ENCODE measurements at regions of chr3 and their contacts with region 1.

Region 1: DNA sequence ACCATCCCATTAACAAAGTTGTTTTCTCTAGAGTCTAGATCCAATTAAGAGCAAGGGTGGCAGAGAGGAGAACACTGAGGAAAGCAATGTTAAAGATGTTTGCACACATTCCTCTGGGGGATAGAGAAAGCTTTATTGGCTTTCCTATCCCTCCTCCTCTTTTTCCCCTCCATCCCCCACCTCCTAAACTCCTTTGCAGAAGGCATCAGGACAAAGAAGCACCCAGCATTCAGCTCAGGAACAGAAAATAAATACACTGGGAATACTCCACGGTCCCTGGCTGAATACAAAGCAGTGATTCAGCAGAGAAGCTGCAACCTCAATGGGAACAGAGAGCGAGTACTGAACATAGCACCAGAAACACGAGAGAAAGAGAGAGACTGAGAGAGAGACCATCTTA is 21.9 kb downstream of the LSAMP start:
- DNase-seq: no peak
- ATAC-seq: no peak; the same call in 2 of the 3 replicates
- H3K4me3 ChIP-seq: no peak overlapping the region
- H3K27ac ChIP-seq: no peak overlapping the region
- H3K4me1 ChIP-seq: no peaks in the 10 kb centered on the region
- H3K27me3 ChIP-seq: no peaks in the 10 kb centered on the region
- CTCF ChIP-seq: no peak
- EP300 ChIP-seq: no peak
- POLR2A ChIP-seq: no peak
- RAD21 ChIP-seq: no peak

Region 2: GRCh38 chr3:116005404-116005803 is 418.0 kb before region 1 on chr3:
- CTCF ChIA-PET with region 1: no interaction called
- POLR2A ChIA-PET with region 1: no interaction called
- RAD21 ChIA-PET with region 1: no interaction called
- SMC1A ChIA-PET with region 1: no interaction called
- in situ Hi-C with region 1: no loop called
- intact Hi-C with region 1: no loop called
- DNase-seq: no peak
- ATAC-seq: peak; percentile 38; the same call in 2 of the 3 replicates
- H3K4me3 ChIP-seq: no peak overlapping the region
- H3K27ac ChIP-seq: no peak overlapping the region
- H3K4me1 ChIP-seq: peaks cover 5% of the 10 kb centered on the region; the same call in 1 of the 2 replicates
- H3K27me3 ChIP-seq: no peaks in the 10 kb centered on the region
- CTCF ChIP-seq: no peak
- EP300 ChIP-seq: no peak
- POLR2A ChIP-seq: no peak
- RAD21 ChIP-seq: no peak

Region 3: GRCh38 chr3:116378077-116378476 is 45.3 kb before region 1 on chr3:
- CTCF ChIA-PET with region 1: no interaction called
- POLR2A ChIA-PET with region 1: no interaction called
- RAD21 ChIA-PET with region 1: no interaction called
- SMC1A ChIA-PET with region 1: no interaction called
- in situ Hi-C with region 1: no loop called
- intact Hi-C with region 1: no loop called
- DNase-seq: no peak
- ATAC-seq: no peak; the same call in 2 of the 3 replicates
- H3K4me3 ChIP-seq: no peak overlapping the region
- H3K27ac ChIP-seq: no peak overlapping the region
- H3K4me1 ChIP-seq: no peaks in the 10 kb centered on the region
- H3K27me3 ChIP-seq: no peaks in the 10 kb centered on the region
- CTCF ChIP-seq: no peak
- EP300 ChIP-seq: no peak
- POLR2A ChIP-seq: no peak
- RAD21 ChIP-seq: no peak

Region 4: GRCh38 chr3:116394365-116394764 is 29.0 kb before region 1 on chr3:
- CTCF ChIA-PET with region 1: no interaction called
- POLR2A ChIA-PET with region 1: no interaction called
- RAD21 ChIA-PET with region 1: no interaction called
- SMC1A ChIA-PET with region 1: no interaction called
- in situ Hi-C with region 1: no loop called
- intact Hi-C with region 1: no loop called
- DNase-seq: no peak
- ATAC-seq: no peak
- H3K4me3 ChIP-seq: no peak overlapping the region
- H3K27ac ChIP-seq: no peak overlapping the region
- H3K4me1 ChIP-seq: no peaks in the 10 kb centered on the region
- H3K27me3 ChIP-seq: no peaks in the 10 kb centered on the region
- CTCF ChIP-seq: no peak
- EP300 ChIP-seq: no peak
- POLR2A ChIP-seq: no peak
- RAD21 ChIP-seq: no peak

Region 5: GRCh38 chr3:116441652-116442051 is 18.3 kb after region 1 on chr3:
- CTCF ChIA-PET with region 1: interaction called, 3 read pairs
- POLR2A ChIA-PET with region 1: interaction called, 4 read pairs
- RAD21 ChIA-PET with region 1: no interaction called
- SMC1A ChIA-PET with region 1: interaction called, 10 read pairs
- in situ Hi-C with region 1: no loop called
- intact Hi-C with region 1: no loop called
- DNase-seq: no peak
- ATAC-seq: no peak
- H3K4me3 ChIP-seq: no peak overlapping the region
- H3K27ac ChIP-seq: no peak overlapping the region
- H3K4me1 ChIP-seq: no peaks in the 10 kb centered on the region
- H3K27me3 ChIP-seq: peaks cover 2 to 6% of the 10 kb centered on the region in 2 experiments; a peak in 2 of 4 replicates
- CTCF ChIP-seq: no peak
- EP300 ChIP-seq: no peak
- POLR2A ChIP-seq: no peak
- RAD21 ChIP-seq: no peak

Region 6: DNA sequence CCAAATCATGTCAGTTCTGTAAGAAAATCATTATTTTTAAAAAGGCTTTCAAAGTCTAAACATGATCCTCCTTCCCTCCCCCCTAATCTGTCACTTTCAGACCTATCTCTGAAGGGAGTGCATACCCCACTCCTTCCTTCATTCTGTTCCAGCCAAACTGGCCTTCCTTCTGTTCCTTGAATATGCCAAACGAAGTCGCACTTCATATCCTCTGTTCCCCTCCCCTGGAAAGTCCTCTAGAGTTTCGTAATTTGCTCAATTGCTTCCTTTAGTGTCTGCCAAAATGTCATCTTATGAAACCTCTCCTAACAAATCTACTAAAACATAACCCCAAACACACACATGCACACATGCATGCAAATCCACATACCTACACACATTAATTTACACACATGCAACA is 216.7 kb after region 1 on chr3:
- CTCF ChIA-PET with region 1: no interaction called
- POLR2A ChIA-PET with region 1: no interaction called
- RAD21 ChIA-PET with region 1: no interaction called
- SMC1A ChIA-PET with region 1: no interaction called
- in situ Hi-C with region 1: no loop called
- intact Hi-C with region 1: no loop called
- DNase-seq: no peak
- ATAC-seq: no peak
- H3K4me3 ChIP-seq: no peak overlapping the region
- H3K27ac ChIP-seq: no peak overlapping the region
- H3K4me1 ChIP-seq: no peaks in the 10 kb centered on the region
- H3K27me3 ChIP-seq: no peaks in the 10 kb centered on the region
- CTCF ChIP-seq: no peak
- EP300 ChIP-seq: no peak
- POLR2A ChIP-seq: no peak
- RAD21 ChIP-seq: no peak

Measured in GM12878 (cell line).